Lower leg skin (tissue), 4 donors: ENCODE measurements at regions of chr7 and their contacts with region 1.

Region 1: GRCh38 chr7:123327661-123328060 is 127.9 kb upstream of the SLC13A1 start:
- DNase-seq: no peak
- H3K4me3 ChIP-seq: no peak overlapping the region
- CTCF ChIP-seq: no peak
- POLR2A ChIP-seq: no peak

Region 2: GRCh38 chr7:123285076-123285732 is 42.5 kb before region 1 on chr7:
- intact Hi-C with region 1: loop called (anchors 1 kb)
- DNase-seq: no peak
- H3K4me3 ChIP-seq: no peak overlapping the region
- CTCF ChIP-seq: no peak
- POLR2A ChIP-seq: no peak